ENCODE measurements at regions of chr12 and their contacts with region 1.

Region 1: DNA sequence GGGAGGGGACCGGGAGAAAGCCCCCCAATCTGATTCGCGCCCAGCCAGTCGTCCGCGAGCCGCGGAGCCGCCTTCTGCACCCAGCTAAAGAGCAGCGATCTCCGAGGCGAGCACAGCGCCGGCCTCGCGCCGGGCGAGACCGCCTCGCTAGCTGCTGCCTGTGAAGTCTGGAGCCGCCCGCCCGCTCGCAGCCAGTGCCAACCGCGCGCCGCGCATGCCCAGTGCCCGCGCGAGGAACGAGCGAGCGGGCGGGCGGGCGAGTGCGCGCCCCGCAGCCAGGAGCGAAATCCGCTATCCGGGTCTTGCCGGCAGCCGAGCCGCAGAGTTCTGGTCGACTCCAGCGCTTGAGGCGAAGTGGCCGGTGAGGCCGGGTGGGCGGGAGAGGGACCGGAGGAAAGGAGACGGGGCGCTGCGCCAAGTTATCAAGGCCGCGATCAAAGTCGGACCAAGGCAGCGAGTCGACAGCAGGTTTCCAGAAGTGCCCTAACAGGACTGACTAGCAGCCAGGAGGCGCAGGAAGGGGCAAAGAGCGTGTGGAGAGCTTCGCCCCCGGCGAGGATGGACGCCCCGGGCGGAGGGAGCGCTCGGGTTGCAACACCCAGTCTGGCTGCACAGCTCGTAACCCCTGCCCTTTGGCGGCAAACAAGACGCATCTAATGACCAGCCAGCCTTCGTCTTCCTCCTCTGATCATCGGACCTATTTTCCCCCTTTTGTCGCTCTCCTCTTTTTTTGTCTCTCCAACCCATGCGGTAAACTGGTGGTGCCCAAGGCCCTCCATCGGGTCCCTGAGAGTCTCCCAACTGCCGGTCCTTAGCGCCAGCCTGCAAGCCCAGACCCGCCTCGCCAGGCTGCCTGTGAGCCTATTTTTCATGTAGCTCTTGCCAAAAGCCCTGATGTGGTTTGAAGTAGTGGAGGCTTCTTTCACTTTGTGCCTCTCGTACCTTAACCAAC is at the start of gene EPS8:
- DNase-seq: peak; percentile 96 to 98
- ATAC-seq: peak; percentile 96
- H3K4me3 ChIP-seq: peak within 1 kb of the TSS; percentile 73 to 94
- H3K27ac ChIP-seq: peak within 1 kb of the TSS; percentile 78 to 80
- H3K4me1 ChIP-seq: no peaks in the 10 kb centered on the region
- H3K27me3 ChIP-seq: no peaks in the 10 kb centered on the region
- total RNA-seq, gene EPS8: 124 to 165 TPM

Region 2: DNA sequence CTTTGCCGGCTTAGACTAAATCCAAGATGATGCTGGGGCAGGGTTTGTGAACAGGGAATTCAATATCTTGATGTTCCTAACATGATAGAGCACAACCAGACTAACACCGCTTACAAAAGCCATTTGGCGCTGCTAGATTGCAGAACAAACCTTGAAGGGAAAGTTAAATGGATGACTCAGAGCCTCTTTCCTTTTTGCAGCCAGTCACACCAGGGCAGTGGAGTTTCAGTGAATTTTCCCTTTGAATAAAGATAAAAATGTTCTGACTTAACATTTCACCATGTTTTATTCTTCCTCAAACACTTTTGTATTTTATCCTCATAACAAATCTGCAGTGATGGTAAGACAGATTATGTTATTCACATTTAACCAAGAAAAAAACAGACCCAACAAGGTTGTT is 769.3 kb before region 1 on chr12:
- intact Hi-C with region 1: no loop called
- DNase-seq: no peak
- ATAC-seq: no peak
- H3K4me3 ChIP-seq: no peak overlapping the region
- H3K27ac ChIP-seq: no peak overlapping the region
- H3K4me1 ChIP-seq: no peaks in the 10 kb centered on the region
- H3K27me3 ChIP-seq: no peaks in the 10 kb centered on the region

Region 3: DNA sequence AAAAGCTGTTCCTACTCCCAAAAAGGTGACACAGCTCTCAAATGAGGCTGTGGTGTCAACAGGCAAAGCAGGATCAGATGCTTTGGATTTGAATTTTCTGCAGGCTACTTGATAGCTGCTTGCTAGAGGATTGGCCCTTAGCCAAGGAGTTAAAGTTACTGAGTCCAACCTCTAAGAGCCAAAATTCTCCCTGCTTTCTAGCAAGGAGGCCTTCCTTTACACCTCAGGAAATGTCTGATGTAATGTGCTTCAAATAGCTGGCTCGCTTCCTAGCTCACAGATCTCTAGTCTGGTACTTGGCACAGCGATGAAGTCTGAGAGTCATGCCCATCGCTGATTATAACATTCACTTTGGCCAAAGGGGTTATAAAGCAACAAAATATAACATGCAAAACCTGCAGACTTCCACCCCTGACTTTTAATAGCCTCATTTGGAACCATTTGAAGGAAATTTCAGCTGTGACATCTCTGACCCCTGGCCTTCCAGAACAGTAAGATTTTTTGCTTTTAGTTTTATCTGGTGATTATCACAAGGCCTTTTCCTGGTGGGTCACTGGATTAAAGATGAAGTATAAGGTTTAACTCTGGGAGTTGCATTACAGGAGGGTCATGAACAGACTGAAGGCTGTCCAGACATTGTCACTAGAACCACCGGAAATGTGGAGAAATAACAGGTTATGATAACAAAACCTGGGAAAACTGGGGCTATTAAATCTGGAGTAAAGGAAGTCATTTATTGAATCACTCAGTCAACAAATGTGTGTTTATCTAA is 190.0 kb before region 1 on chr12:
- intact Hi-C with region 1: loop called in 1 of 2 experiments (anchors 5 kb)
- DNase-seq: peak in 1 of 2 donors; percentile 46
- ATAC-seq: peak; percentile 61
- H3K4me3 ChIP-seq: no peak overlapping the region
- H3K27ac ChIP-seq: peak overlapping the region in 1 of 2 donors; percentile 57
- H3K4me1 ChIP-seq: peaks cover 0 to 3% of the 10 kb centered on the region in 2 donors
- H3K27me3 ChIP-seq: no peaks in the 10 kb centered on the region

Region 4: GRCh38 chr12:15629108-15629507 is 160.4 kb before region 1 on chr12:
- intact Hi-C with region 1: loop called in 1 of 2 experiments (anchors 10 kb)
- DNase-seq: peak; percentile 61 to 77
- ATAC-seq: peak; percentile 93
- H3K4me3 ChIP-seq: no peak overlapping the region
- H3K27ac ChIP-seq: peak overlapping the region; percentile 92 to 96
- H3K4me1 ChIP-seq: peaks cover 2 to 18% of the 10 kb centered on the region in 2 donors
- H3K27me3 ChIP-seq: no peaks in the 10 kb centered on the region

Region 5: DNA sequence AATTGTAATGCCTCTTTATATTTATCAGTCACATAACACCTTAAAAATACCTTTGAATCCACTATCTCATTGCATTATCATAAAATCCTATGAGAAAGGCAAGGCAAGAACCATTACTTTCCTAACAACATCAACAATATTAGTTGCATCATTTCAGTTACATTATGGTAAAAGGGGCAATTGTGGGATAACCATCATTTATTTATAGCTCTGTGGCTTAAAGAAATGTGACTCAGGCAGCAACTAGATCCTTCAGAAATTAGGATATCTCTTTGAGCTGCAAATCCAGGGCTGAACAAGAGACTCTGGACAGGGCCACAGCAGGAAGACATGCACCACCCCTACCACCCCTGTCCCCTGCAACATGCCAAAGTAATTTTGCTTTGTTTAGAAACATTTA is 36.7 kb before region 1 on chr12:
- intact Hi-C with region 1: loop called in 1 of 2 experiments (anchors 5 kb)
- DNase-seq: no peak
- ATAC-seq: no peak
- H3K4me3 ChIP-seq: no peak overlapping the region
- H3K27ac ChIP-seq: no peak overlapping the region
- H3K4me1 ChIP-seq: peaks cover 7 to 10% of the 10 kb centered on the region in 2 donors
- H3K27me3 ChIP-seq: no peaks in the 10 kb centered on the region

Region 6: DNA sequence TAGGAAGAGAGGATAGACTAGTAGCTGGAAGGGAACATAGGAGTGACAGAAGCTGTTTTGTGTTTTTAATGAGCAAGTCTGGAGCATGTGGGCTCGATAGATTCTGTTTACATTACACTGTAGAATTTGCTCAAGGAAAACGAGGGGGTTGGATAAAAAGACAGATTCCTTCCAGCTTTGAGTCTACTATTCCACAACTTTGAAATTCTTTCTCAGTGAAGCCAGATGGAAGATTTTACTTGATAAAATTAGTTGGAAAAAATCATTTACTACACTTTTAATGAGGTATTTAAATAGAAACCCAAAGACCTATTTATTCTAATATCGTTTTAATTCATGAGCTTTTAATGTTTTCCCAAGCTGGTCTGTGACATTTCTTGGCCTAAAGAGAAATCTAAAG is 19.2 kb after region 1 on chr12:
- intact Hi-C with region 1: no loop called
- DNase-seq: no peak
- ATAC-seq: no peak
- H3K4me3 ChIP-seq: no peak overlapping the region
- H3K27ac ChIP-seq: no peak overlapping the region
- H3K4me1 ChIP-seq: no peaks in the 10 kb centered on the region
- H3K27me3 ChIP-seq: no peaks in the 10 kb centered on the region

Region 7: GRCh38 chr12:15837141-15837790 is 47.8 kb after region 1 on chr12:
- intact Hi-C with region 1: loop called (anchors 5 kb)
- DNase-seq: no peak
- ATAC-seq: peak; percentile 64
- H3K4me3 ChIP-seq: no peak overlapping the region
- H3K27ac ChIP-seq: peak overlapping the region in 1 of 2 donors; percentile 26
- H3K4me1 ChIP-seq: no peaks in the 10 kb centered on the region
- H3K27me3 ChIP-seq: no peaks in the 10 kb centered on the region

Region 8: DNA sequence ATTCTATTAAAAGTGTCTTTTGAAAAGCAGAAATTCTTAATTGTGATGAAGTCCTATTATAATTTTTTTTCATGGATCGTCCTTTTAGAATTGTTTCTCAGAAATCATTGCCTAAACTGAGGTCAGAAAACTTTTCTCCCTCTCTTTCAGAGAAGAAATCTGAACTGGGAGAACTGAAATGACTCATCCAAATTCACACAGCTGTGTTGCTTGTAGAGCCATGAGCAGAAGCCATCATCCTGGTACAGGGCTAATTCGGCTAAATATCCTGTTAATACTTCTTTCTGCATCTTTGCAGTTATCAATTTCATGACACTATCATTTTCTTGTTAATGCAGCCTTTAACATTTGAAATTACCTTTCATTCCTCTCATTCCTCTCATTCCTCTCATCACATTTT is 472.4 kb after region 1 on chr12:
- intact Hi-C with region 1: no loop called
- DNase-seq: no peak
- ATAC-seq: no peak
- H3K4me3 ChIP-seq: no peak overlapping the region
- H3K27ac ChIP-seq: no peak overlapping the region
- H3K4me1 ChIP-seq: no peaks in the 10 kb centered on the region
- H3K27me3 ChIP-seq: no peaks in the 10 kb centered on the region